K562 (cell line): ENCODE measurements at regions of chr4 and their contacts with region 1.

Region 1: DNA sequence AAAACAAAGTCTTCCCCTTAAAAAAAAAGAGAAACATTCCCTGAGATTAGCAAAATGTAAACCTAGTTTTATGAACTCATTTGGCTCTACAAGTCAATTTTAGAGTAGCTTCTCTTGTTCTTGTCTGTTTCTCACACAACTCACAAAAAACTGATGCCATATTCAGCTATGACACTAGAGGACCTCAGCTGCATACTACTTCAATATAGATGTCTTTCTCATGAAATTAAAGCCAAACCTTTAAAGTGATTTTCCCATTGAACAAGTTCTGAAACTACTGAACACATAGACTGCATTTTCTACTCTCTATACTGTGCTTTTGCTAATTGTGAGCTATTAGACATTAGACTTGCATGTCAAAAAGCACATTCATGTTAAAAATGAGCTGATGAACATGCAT is 49.8 kb downstream of the TBCK start:
- DNase-seq: peak; percentile 10 to 44 (median 21)
- ATAC-seq: peak; percentile 82
- H3K4me3 ChIP-seq: no peak overlapping the region
- H3K27ac ChIP-seq: no peak overlapping the region
- H3K4me1 ChIP-seq: peaks cover 0 to 3% of the 10 kb centered on the region in 2 experiments; a peak in 1 of 5 replicates
- H3K27me3 ChIP-seq: no peaks in the 10 kb centered on the region
- CTCF ChIP-seq: peak; percentile 34 to 76 (median 52); a peak in 5 of 6 replicates
- EP300 ChIP-seq: no peak
- POLR2A ChIP-seq: no peak
- RAD21 ChIP-seq: peak; percentile 58 to 66

Region 2: DNA sequence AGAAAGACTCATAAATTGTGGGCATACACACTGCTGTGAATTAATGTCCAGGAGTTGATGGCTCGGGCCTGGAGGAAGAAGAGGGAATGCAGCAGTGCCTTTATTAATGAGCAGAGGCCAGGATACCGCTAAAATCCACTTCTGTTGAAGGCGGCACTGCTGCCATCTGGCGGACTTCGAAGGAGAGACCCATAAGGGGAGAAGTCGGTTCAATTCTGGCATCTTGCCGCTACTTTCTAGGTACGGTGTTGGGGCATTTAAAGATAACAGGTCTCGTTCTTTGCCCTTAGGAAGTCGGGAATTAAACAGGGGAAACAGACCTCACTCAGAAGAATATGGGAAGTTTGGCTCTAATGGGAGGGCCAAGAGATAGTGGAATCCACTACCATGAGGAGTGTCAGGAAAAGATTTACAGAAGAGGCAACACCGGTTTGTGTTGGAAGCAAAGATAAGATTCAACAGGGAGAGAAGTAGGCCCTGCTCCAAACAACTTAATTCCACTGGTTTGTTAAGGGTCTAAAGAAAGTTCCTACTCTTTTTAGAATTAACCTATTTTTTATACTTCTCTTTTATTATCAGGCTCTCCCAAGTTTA is 236.0 kb after region 1 on chr4:
- CTCF ChIA-PET with region 1: interaction called, 5 read pairs
- POLR2A ChIA-PET with region 1: no interaction called
- in situ Hi-C with region 1: no loop called
- intact Hi-C with region 1: loop called (anchors 1 kb)
- DNase-seq: peak; percentile 24 to 64 (median 42)
- ATAC-seq: peak; percentile 95
- H3K4me3 ChIP-seq: no peak overlapping the region
- H3K27ac ChIP-seq: no peak overlapping the region
- H3K4me1 ChIP-seq: no peaks in the 10 kb centered on the region
- H3K27me3 ChIP-seq: no peaks in the 10 kb centered on the region
- CTCF ChIP-seq: peak; percentile 66 to 70 (median 68)
- EP300 ChIP-seq: no peak
- POLR2A ChIP-seq: no peak
- RAD21 ChIP-seq: peak; percentile 44 to 67; a peak in 3 of 4 replicates

Region 3: DNA sequence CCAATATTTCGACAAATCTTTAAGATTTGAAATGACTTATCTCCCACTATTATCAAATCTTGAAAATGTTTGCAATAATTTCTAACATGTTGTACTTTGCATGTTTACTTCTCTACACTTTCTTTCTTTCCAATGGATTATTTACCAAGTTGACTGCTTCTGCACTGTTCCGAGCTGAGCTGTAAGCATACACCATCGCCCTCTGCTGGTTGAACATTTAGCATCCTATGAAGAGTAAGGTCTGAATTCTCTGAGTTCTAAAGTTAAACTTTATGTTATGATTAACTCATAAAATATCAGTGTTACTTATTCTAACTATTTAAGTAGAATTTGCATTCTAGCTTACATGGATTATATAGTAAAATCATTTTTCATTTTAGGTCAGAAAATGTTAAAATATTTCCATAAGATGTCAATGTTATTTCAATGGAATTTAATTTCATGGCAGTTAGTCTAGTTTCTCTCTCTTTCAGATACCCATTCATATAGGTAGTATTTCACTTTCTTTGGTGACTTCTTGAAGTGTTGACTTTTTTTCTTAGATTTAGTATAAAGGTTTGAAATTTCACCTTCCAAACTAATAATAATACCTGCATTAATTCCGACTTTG is 632.5 kb after region 1 on chr4:
- CTCF ChIA-PET with region 1: no interaction called
- POLR2A ChIA-PET with region 1: no interaction called
- in situ Hi-C with region 1: no loop called
- intact Hi-C with region 1: loop called (anchors 2 kb)
- DNase-seq: peak; percentile 27 to 50 (median 38)
- ATAC-seq: peak; percentile 74
- H3K4me3 ChIP-seq: no peak overlapping the region
- H3K27ac ChIP-seq: no peak overlapping the region
- H3K4me1 ChIP-seq: no peaks in the 10 kb centered on the region
- H3K27me3 ChIP-seq: no peaks in the 10 kb centered on the region
- CTCF ChIP-seq: peak; percentile 32 to 52 (median 47); a peak in 4 of 6 replicates
- EP300 ChIP-seq: no peak
- POLR2A ChIP-seq: no peak
- RAD21 ChIP-seq: peak; percentile 15 to 53; a peak in 3 of 4 replicates